ENCODE measurements at regions of chr14 and their contacts with region 1.

Region 1: DNA sequence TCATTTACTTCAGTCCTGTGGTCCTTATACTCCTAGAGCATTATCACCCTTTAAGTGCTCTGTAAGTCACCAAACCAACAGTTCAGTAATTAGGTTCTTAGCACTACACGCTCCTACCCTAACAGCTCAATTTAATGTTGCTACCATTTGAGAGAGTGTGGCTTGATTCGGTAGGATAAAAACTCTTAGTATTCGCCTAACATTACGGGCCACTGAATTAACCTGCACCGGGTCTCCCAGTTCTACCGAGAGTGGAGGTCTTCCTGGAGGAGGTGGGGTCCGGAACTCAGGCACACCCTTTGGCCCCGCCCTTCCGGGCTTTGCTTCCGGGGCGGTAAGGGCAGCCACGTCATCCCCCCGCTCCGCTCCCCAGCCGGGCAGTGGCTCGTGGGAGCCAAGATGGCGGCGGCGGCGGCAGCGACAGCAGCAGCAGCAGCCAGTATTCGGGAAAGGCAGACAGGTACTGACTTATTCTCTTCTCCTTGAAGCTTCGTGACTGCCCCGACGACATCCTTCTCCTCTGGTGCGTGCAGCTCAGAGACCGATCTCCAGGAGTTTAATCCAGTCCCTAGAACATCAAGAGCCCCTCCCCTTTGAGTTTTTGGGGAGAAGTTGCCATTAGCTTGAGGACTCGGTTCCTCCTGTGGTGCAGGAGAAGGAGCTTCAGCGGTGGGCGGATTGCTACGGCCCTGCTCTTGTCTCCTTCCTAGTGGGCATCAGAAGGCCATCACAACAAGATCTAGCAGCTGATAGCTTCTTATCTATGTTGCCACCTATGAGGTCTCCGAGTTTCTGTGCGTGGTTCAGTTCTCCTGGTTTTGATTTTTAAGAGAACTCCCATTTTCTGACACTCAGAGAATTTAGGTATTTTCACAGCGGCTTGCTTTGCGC is at the start of gene SCFD1:
- DNase-seq: peak; percentile 95
- H3K4me3 ChIP-seq: peak within 1 kb of the TSS; percentile 81
- H3K27ac ChIP-seq: peak within 1 kb of the TSS; percentile 74
- H3K4me1 ChIP-seq: peaks cover 28% of the 10 kb centered on the region
- CTCF ChIP-seq: no peak
- total RNA-seq, gene SCFD1: 44.6 and 65.1 TPM in 2 replicates

Region 2: GRCh38 chr14:30214461-30215090 is 407.6 kb before region 1 on chr14:
- CTCF ChIA-PET with region 1: no interaction called
- POLR2A ChIA-PET with region 1: no interaction called
- intact Hi-C with region 1: no loop called
- DNase-seq: peak; percentile 47
- H3K4me3 ChIP-seq: no peak overlapping the region
- H3K27ac ChIP-seq: no peak overlapping the region
- H3K4me1 ChIP-seq: no peaks in the 10 kb centered on the region
- CTCF ChIP-seq: peak; percentile 82

Region 3: GRCh38 chr14:30443368-30444007 is 178.7 kb before region 1 on chr14:
- CTCF ChIA-PET with region 1: no interaction called
- POLR2A ChIA-PET with region 1: no interaction called
- intact Hi-C with region 1: no loop called
- DNase-seq: peak; percentile 4
- H3K4me3 ChIP-seq: no peak overlapping the region
- H3K27ac ChIP-seq: no peak overlapping the region
- H3K4me1 ChIP-seq: no peaks in the 10 kb centered on the region
- CTCF ChIP-seq: peak; percentile 66

Region 4: GRCh38 chr14:30558675-30559555 is 63.3 kb before region 1 on chr14 and contains the start of gene G2E3:
- CTCF ChIA-PET with region 1: no interaction called
- POLR2A ChIA-PET with region 1: interaction called, 4 read pairs
- intact Hi-C with region 1: loop called (anchors 1 kb)
- DNase-seq: peak; percentile 92
- H3K4me3 ChIP-seq: peak within 1 kb of the TSS; percentile 91
- H3K27ac ChIP-seq: peak within 1 kb of the TSS; percentile 73
- H3K4me1 ChIP-seq: peaks cover 20% of the 10 kb centered on the region
- CTCF ChIP-seq: no peak
- total RNA-seq, gene G2E3: 22.3 and 22.7 TPM in 2 replicates

Region 5: GRCh38 chr14:30632730-30633129 is 10.5 kb after region 1 on chr14:
- CTCF ChIA-PET with region 1: no interaction called
- POLR2A ChIA-PET with region 1: interaction called, 10 read pairs
- intact Hi-C with region 1: no loop called
- DNase-seq: no peak
- H3K4me3 ChIP-seq: no peak overlapping the region
- H3K27ac ChIP-seq: no peak overlapping the region
- H3K4me1 ChIP-seq: no peaks in the 10 kb centered on the region
- CTCF ChIP-seq: no peak

Measured in OCI-LY7 (cell line).